PC-9 (cell line): ENCODE measurements at regions of chr1 and their contacts with region 1.

Region 1: DNA sequence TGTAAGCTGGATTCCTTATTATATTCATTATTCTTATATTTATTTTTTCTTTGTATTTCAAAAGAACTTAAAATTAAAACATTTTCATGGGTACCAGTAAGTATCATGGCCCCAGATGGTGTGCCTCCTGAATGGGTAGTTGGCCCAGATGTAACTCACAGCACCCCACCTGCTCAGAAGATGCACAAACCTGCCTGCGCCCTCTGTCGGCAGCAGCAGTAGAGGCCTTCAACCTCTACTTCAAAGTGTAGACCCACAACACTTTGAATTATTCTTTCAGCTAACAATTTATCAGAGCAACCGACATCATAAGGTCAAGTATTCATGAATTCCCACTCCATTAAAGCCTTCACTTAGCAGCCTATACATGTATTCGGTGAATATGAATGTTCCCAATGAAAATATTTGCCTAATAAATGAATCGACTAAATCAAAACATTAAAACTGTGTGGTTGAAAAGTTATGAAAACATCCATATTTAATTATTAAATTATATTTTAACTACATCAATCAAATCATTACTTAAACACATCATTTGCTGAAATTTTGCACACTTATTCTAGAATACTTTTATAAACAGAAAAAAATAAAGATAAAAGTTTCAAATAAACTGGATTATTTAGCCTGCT is 25.4 kb downstream of the PIGM start:
- DNase-seq: peak; percentile 60 to 76
- H3K4me3 ChIP-seq: no peak overlapping the region
- H3K27ac ChIP-seq: no peak overlapping the region
- H3K4me1 ChIP-seq: no peaks in the 10 kb centered on the region; the same call in 1 of the 2 replicates
- H3K27me3 ChIP-seq: no peaks in the 10 kb centered on the region
- CTCF ChIP-seq: peak; percentile 95

Region 2: GRCh38 chr1:159009704-159010361 is 996.6 kb before region 1 on chr1 and contains the start of gene IFI16:
- CTCF ChIA-PET with region 1: no interaction called
- POLR2A ChIA-PET with region 1: no interaction called
- intact Hi-C with region 1: no loop called
- DNase-seq: peak in 1 of 2 experiments; percentile 34
- H3K4me3 ChIP-seq: no peak within 1 kb of the TSS
- H3K27ac ChIP-seq: no peak within 1 kb of the TSS
- H3K4me1 ChIP-seq: no peaks in the 10 kb centered on the region
- H3K27me3 ChIP-seq: 0 out of 2 replicates have a peak, but pooled peaks cover 6% of the 10 kb centered on the region
- CTCF ChIP-seq: no peak
- total RNA-seq, gene IFI16: 18.5 and 31.3 TPM in 2 replicates

Region 3: GRCh38 chr1:159161001-159161718 is 845.3 kb before region 1 on chr1:
- CTCF ChIA-PET with region 1: interaction called, 5 read pairs
- POLR2A ChIA-PET with region 1: no interaction called
- intact Hi-C with region 1: loop called (anchors 5 kb)
- DNase-seq: peak; percentile 41 to 60
- H3K4me3 ChIP-seq: no peak overlapping the region
- H3K27ac ChIP-seq: no peak overlapping the region
- H3K4me1 ChIP-seq: no peaks in the 10 kb centered on the region
- H3K27me3 ChIP-seq: peaks cover 12% of the 10 kb centered on the region
- CTCF ChIP-seq: peak; percentile 90

Region 4: GRCh38 chr1:159798893-159799292 is 207.5 kb before region 1 on chr1:
- CTCF ChIA-PET with region 1: interaction called, 10 read pairs
- POLR2A ChIA-PET with region 1: no interaction called
- intact Hi-C with region 1: loop called (anchors 1 kb)
- DNase-seq: peak; percentile 61 to 70
- H3K4me3 ChIP-seq: no peak overlapping the region
- H3K27ac ChIP-seq: no peak overlapping the region
- H3K4me1 ChIP-seq: no peaks in the 10 kb centered on the region
- H3K27me3 ChIP-seq: peaks cover 19% of the 10 kb centered on the region
- CTCF ChIP-seq: peak; percentile 74

Region 5: DNA sequence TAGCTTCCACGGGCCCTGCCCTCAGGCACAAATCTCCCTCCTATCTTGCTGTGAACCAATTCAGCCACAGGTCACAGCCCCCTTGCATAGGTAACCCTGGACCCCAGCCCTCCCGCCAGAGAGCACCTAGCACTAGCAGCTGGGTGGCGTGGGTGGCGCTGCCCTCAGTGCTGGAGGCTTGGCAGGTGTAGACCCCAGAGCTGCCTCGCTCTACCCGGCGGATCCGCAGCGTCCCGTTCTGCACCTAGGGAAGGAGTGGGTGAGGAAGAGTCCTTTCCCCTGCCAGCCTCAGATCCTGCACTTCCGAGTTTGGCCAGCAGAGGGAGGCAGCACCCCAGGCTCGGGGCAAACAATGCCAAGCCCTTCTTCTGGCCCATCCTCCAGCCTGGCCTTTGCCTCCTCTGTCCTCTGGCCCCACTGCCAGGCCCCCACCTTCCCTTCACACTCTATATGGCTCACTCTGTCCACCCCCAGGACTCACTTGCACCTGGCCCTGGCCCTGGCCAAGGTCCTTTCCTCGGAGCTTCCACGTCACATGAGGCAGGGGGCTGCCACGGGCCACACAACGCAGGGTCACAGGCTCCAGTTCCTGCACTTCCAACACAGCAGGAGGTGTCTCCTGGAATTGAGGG is 70.0 kb before region 1 on chr1:
- CTCF ChIA-PET with region 1: interaction called, 12 read pairs
- POLR2A ChIA-PET with region 1: interaction called, 3 read pairs
- intact Hi-C with region 1: loop called (anchors 1 kb)
- DNase-seq: peak in 1 of 2 experiments; percentile 82
- H3K4me3 ChIP-seq: no peak overlapping the region
- H3K27ac ChIP-seq: peak overlapping the region; percentile 56; the same call in 1 of the 2 replicates
- H3K4me1 ChIP-seq: peaks cover 35% of the 10 kb centered on the region
- H3K27me3 ChIP-seq: no peaks in the 10 kb centered on the region
- CTCF ChIP-seq: peak; percentile 95

Region 6: GRCh38 chr1:159945483-159946241 is 60.8 kb before region 1 on chr1 and contains the start of gene IGSF9:
- CTCF ChIA-PET with region 1: interaction called, 20 read pairs
- POLR2A ChIA-PET with region 1: no interaction called
- intact Hi-C with region 1: loop called (anchors 2 kb)
- DNase-seq: peak; percentile 90 to 94
- H3K4me3 ChIP-seq: peak within 1 kb of the TSS; percentile 76
- H3K27ac ChIP-seq: peak within 1 kb of the TSS; percentile 53
- H3K4me1 ChIP-seq: peaks cover 40% of the 10 kb centered on the region
- H3K27me3 ChIP-seq: no peaks in the 10 kb centered on the region
- CTCF ChIP-seq: peak; percentile 61
- total RNA-seq, gene IGSF9: 22.9 and 23.4 TPM in 2 replicates

Region 7: GRCh38 chr1:160078512-160079195 is 72.2 kb after region 1 on chr1:
- CTCF ChIA-PET with region 1: interaction called, 6 read pairs
- POLR2A ChIA-PET with region 1: no interaction called
- intact Hi-C with region 1: loop called (anchors 2 kb)
- DNase-seq: peak in 1 of 2 experiments; percentile 59
- H3K4me3 ChIP-seq: no peak overlapping the region
- H3K27ac ChIP-seq: no peak overlapping the region
- H3K4me1 ChIP-seq: no peaks in the 10 kb centered on the region
- H3K27me3 ChIP-seq: peaks cover 38% of the 10 kb centered on the region
- CTCF ChIP-seq: peak; percentile 92